Prostate gland (tissue), 2 donors: ENCODE measurements at regions of chr17 and their contacts with region 1.

Region 1: DNA sequence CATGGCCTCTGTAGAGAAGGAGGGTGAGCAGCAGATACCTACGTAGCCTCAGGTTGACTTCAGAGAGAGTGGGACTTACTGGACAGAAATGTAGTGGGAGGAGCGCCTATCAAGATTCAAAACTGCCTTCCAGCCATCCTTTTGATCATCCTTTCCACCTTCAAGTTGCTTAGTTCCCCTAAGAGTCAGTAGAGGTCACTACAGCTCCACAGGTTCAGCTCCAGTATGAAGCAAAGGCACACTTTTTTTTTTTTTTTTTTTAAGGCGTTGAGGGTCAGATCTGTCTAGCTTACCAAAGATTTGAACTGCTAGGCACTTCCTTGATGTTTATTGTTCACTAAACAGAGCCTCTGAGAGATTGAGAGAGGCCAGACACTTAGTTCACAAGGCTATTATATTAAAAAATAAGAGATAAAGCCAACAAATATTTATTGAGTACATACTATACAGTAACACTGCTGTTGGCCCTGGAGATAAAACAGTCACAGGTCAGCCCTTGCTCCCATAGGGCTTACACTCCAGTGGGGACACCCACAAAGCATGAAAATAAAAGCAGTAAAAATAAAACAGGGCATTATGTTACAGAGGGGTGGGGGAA is 3.1 kb downstream of the RNF227 start:
- DNase-seq: peak; percentile 35
- H3K4me3 ChIP-seq: no peak overlapping the region
- H3K27ac ChIP-seq: peak overlapping the region in 1 of 2 donors; percentile 39
- H3K4me1 ChIP-seq: peaks cover 7% of the 10 kb centered on the region
- H3K27me3 ChIP-seq: no peaks in the 10 kb centered on the region
- CTCF ChIP-seq: peak; percentile 27 to 73 (median 54)
- POLR2A ChIP-seq: no peak

Region 2: GRCh38 chr17:7989781-7990655 is 77.0 kb after region 1 on chr17:
- intact Hi-C with region 1: loop called (anchors 2 kb)
- DNase-seq: peak; percentile 79
- H3K4me3 ChIP-seq: peak overlapping the region; percentile 43 to 49
- H3K27ac ChIP-seq: peak overlapping the region; percentile 57 to 67
- H3K4me1 ChIP-seq: no peaks in the 10 kb centered on the region
- H3K27me3 ChIP-seq: no peaks in the 10 kb centered on the region
- CTCF ChIP-seq: peak; percentile 94 to 98 (median 97)
- POLR2A ChIP-seq: no peak

Region 3: GRCh38 chr17:8057691-8058114 is 144.7 kb after region 1 on chr17:
- intact Hi-C with region 1: loop called (anchors 5 kb)
- DNase-seq: peak; percentile 72
- H3K4me3 ChIP-seq: peak overlapping the region; percentile 29 to 39
- H3K27ac ChIP-seq: peak overlapping the region; percentile 92 to 95
- H3K4me1 ChIP-seq: no peaks in the 10 kb centered on the region
- H3K27me3 ChIP-seq: no peaks in the 10 kb centered on the region
- CTCF ChIP-seq: peak; percentile 24 to 87 (median 78)
- POLR2A ChIP-seq: peak; percentile 5

Region 4: DNA sequence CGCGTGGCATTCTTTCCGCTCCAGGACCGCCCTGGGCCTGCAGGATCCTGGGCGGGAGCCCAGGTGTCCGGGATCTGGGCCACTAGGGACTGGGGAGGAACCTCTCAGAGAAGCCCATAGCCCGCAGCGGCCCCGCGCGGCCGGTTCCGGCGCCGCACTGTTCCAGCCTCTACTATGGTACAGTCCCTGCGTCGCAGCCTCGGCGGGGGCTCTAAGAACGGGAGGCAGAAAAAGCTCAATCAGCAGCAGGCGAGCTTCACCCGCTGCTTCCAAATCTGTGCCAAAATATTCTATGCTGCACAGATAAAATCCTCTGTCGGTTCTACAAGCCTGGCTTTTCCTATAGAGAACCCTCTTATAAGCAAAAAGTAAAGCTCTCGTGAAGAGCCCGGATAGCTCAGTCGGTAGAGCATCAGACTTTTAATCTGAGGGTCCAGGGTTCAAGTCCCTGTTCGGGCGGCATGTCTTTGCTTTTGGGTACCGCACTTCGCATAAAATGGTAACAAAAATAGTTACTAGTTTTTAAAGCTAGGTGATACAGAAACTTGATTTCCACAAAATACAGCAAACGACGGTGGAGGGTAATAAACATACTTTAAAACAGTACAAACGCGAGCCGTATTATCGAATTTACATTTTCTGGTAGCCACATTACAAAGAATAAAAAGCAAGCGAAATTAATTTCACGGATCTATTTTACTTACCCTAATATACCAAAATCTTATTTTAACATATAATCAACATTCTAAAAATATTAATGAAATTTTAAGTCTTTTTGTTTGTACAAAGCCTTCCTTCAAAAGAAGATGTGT is 205.9 kb after region 1 on chr17:
- intact Hi-C with region 1: no loop called
- DNase-seq: peak; percentile 87
- H3K4me3 ChIP-seq: peak overlapping the region; percentile 34 to 44
- H3K27ac ChIP-seq: peak overlapping the region; percentile 78 to 82
- H3K4me1 ChIP-seq: peaks cover 10% of the 10 kb centered on the region
- H3K27me3 ChIP-seq: no peaks in the 10 kb centered on the region
- CTCF ChIP-seq: peak; percentile 74 to 94 (median 84)
- POLR2A ChIP-seq: peak; percentile 3